OCI-LY7 (cell line): ENCODE measurements at regions of chr17 and their contacts with region 1.

Region 1: DNA sequence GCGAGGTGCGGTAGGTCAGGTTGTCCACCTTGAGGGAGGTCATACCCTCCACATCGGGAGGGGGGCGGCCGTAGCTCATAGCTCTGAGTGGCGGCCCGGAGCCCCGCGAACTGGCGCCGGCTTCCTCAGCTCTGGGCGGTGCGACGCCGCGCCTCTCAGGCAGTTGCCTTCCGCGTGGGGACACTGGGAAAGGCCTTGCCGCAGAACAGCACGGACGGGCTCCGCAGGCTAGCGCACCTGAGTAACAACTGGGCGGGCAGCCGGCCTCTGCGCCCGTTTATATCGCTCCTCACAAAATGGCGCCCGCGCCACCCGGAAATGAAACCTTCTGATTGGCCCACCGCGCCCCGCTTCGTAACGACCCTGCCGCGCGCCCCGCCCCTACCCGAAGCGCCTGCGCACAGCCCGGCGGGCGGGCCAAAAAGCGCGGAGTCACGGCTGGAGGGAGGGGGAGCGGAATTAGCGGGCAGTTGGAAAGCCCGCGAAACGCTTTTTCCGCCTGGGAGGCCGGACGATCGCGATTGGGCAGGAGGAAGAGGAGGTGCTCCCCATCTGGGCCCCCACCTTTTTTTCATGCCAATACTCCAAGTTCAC is at the start of gene SRSF2:
- DNase-seq: peak; percentile 100
- H3K4me3 ChIP-seq: peak within 1 kb of the TSS; percentile 77
- H3K27ac ChIP-seq: peak within 1 kb of the TSS; percentile 92
- H3K4me1 ChIP-seq: peaks cover 53% of the 10 kb centered on the region
- CTCF ChIP-seq: no peak
- total RNA-seq, gene SRSF2: 1,143 and 2,207 TPM in 2 replicates

Region 2: DNA sequence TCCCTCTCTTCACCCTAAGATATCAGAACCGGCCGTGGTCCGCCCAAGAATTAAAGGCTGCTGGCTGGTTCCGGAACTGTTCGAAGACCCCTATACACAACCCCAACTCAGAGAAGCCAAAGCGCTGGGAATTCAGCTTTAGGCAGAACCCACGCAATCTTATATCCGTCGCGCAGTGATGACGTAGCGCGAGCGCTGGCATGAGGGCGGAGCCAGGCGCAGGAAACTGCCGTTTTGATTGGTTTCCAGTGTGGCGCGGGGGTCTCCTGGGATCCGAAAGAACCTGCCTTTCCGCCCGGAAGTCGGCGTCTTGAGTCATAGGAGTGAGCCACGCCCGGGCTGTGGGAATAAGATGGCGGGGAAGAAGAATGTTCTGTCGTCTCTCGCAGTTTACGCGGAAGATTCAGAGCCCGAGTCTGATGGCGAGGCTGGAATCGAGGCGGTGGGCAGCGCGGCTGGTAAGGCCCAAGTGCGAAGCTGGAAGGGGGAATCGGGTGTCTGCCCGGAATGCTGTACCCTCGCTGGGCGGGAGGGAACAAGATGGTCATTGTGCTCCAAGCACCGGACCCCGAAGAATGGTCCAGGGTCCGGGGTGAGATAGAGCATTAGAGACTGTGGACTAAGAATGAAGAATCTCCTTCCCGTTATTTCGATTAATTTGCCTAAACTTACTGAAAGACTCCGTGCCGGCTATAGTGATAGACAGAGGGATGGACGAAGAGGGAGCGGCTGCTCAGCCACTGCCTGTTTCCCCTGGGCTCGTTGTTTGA is 1070.0 kb before region 1 on chr17 and contains the starts of genes RECQL5 and SAP30BP:
- CTCF ChIA-PET with region 1: no interaction called
- POLR2A ChIA-PET with region 1: no interaction called
- intact Hi-C with region 1: loop called (anchors 10 kb)
- DNase-seq: peak; percentile 100
- H3K4me3 ChIP-seq: peak within 1 kb of the TSS; percentile 84
- H3K27ac ChIP-seq: peak within 1 kb of the TSS; percentile 94
- H3K4me1 ChIP-seq: peaks cover 54% of the 10 kb centered on the region
- CTCF ChIP-seq: no peak
- total RNA-seq, gene RECQL5: 90.0 and 91.9 TPM in 2 replicates
- total RNA-seq, gene SAP30BP: 122 and 127 TPM in 2 replicates

Region 3: DNA sequence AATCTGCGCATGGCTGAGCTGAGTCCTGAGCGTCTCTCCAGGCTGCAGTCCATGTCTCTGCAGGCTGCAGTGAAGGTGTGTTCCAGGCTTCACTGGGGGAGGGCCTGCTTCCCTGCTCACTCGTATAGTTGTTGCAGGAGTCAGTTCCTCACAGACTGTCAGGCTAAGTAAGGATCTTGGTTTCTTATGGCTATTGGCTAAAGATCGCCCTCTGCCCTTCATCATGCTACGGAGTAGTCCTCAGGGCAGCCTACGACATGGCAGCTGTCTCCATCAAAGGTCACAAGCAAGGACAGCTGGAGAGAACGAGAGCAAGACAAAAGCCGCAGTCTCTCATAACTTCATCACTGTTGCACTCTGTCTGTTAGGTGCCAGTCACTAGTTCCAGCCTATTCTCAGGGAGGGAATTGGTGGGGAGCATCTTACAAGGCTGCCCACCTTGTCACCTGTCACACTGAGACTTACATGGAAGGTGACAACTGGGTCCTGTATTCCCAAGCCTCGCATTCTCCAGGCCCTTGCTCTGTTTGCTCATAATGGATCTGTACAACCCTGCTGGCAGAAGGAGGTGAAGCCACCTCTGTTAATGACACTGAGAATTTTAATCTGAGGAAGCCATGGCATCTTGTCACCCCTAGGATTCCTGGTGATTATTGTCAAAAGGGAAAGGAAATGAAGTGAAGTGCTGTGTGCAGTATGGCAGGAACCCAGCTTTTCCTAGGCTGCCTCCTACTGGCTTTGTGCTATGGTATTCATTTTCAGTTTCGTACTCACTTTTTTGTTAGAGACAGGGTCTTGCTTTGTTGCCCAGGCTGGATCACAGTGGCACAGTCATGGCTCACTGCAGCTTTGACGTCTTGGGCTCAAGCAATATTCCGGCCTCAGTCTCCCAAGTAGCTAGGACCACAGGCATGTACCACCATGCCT is 44.1 kb after region 1 on chr17:
- CTCF ChIA-PET with region 1: interaction called, 5 read pairs
- POLR2A ChIA-PET with region 1: interaction called, 12 read pairs
- intact Hi-C with region 1: loop called (anchors 2 kb)
- DNase-seq: peak; percentile 55
- H3K4me3 ChIP-seq: no peak overlapping the region
- H3K27ac ChIP-seq: peak overlapping the region; percentile 92
- H3K4me1 ChIP-seq: peaks cover 79% of the 10 kb centered on the region
- CTCF ChIP-seq: peak; percentile 65; the same call in 1 of the 2 replicates

Region 4: DNA sequence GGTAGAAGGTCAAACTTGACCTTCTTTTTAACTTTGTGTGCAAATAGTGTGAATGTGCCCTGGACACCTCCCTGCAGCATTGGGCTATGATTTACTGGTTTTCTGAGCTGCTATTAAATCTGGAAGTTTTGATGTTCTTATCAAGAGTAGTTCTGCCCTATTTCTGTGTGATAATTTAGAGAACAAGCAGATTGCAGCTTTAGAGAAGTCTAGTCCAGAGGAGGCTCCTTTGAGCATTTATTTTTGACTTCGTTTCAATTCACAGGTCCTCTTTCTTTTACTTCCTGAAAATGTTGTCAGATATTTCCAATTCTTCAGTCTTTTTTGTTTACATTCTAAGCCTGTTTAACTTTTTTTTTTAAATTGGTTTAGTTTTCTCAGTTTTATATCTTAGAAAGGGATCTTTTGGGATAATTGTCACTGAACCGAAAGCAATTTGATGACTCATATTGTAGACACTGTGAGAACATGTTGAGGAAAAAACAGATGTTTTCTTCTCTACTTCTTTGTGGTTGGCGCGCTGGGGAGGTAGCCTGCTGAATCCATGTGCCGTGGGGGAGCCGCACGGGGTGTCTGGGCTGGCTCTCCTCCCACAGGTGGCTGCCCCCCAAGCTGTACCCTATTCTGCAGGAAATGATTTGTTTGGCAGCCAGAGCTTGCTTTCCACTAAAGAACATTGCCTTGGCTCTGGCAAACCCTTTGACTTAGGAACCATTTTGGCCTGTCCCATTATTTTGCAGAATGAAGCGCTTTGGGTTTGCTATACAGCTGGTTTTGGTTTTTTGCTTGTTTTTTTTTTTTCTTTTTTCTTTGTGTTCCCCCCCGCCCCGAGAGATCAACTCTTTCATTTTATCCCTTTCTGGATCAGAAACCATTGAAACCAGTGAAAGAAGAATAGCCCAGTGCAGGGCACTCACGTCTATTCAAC is 54.1 kb after region 1 on chr17:
- CTCF ChIA-PET with region 1: no interaction called
- POLR2A ChIA-PET with region 1: interaction called, 4 read pairs
- intact Hi-C with region 1: loop called (anchors 2 kb)
- DNase-seq: peak; percentile 80
- H3K4me3 ChIP-seq: peak overlapping the region; percentile 43
- H3K27ac ChIP-seq: peak overlapping the region; percentile 95
- H3K4me1 ChIP-seq: peaks cover 65% of the 10 kb centered on the region
- CTCF ChIP-seq: no peak; the same call in 1 of the 2 replicates

Region 5: DNA sequence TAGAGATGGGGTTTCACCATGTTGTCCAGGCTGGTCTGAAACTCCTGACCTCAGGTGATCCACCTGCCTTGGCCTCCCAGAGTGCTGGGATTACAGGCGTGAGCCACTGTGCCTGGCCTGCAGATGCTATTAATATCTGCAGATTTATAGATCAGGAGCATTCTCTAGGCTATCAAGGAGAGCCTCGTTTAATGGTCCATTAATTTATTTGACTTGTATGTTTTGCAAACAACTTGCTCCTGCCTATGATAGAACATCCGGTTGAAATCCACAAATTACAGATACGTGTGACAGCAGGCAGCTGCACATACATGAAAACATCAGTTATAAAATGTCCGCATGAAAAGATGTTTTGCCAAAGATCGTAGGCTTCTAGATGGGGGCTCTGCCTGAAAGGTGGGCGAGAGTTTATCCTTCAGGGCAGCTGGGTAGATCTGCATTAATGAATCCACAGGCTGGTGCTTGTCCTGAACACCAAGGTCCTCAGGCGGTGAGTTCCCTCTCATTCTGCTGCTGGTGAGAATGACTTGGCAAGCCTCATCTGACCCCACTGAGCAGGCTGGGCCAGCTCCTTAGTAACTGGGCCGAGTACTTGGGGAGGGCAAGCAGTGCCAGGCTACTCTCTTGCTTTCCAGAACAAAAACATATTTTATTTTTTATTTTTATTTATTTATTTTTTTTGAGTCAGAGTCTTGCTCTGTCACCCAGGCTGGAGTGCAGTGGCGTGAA is 94.0 kb after region 1 on chr17:
- CTCF ChIA-PET with region 1: no interaction called
- POLR2A ChIA-PET with region 1: no interaction called
- intact Hi-C with region 1: no loop called
- DNase-seq: no peak
- H3K4me3 ChIP-seq: no peak overlapping the region
- H3K27ac ChIP-seq: no peak overlapping the region
- H3K4me1 ChIP-seq: peaks cover 12% of the 10 kb centered on the region
- CTCF ChIP-seq: no peak

Region 6: GRCh38 chr17:76843703-76844484 is 106.7 kb after region 1 on chr17:
- CTCF ChIA-PET with region 1: no interaction called
- POLR2A ChIA-PET with region 1: interaction called, 4 read pairs
- intact Hi-C with region 1: loop called (anchors 2 kb)
- DNase-seq: peak; percentile 92
- H3K4me3 ChIP-seq: peak overlapping the region; percentile 29
- H3K27ac ChIP-seq: peak overlapping the region; percentile 93
- H3K4me1 ChIP-seq: peaks cover 99% of the 10 kb centered on the region
- CTCF ChIP-seq: peak; percentile 72